Mammary epithelial cell (primary cell): ENCODE measurements at regions of chr2 and their contacts with region 1.

Region 1: DNA sequence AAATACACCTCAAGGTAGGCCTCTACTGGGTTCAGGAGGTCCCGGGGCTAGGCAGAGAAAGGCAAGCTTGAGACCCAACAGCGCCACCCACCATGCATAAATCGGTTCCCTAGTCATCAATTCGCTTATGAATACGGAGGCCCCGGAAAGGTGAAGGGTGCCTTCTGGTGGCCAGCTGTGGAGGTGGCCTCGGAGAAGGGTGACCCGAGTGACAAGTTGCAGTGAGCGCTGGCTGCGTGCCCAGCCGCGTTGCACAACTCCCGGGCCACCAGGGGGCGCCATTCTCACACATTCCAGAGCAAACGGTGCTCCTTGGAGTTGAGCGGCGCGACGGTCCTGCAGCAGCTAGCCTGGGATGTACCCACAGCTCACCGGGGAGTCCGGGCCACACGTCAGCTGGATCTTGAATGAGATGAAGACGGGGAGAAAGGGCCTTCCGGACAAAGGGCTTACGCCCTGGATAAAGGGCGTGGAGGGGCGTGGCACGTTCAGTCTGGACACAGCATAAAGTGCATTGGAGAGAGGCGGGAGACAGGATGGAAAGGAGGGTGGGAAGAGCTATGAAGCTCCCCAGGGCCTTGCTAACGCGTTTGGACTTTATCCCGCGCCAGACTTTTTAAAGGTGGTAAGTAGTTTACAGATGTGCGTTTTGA is 20.4 kb downstream of the TMSB10 start:
- DNase-seq: peak; percentile 91
- H3K4me3 ChIP-seq: peak overlapping the region; percentile 13 to 42 (median 34)
- H3K27ac ChIP-seq: peak overlapping the region; percentile 81
- H3K4me1 ChIP-seq: peaks cover 35% of the 10 kb centered on the region
- H3K27me3 ChIP-seq: no peaks in the 10 kb centered on the region
- CTCF ChIP-seq: peak; percentile 89 to 97

Region 2: GRCh38 chr2:84631047-84631446 is 294.8 kb before region 1 on chr2:
- CTCF ChIA-PET with region 1: no interaction called
- dilution Hi-C with region 1: no loop called
- in situ Hi-C with region 1: no loop called
- intact Hi-C with region 1: loop called (anchors 5 kb)
- DNase-seq: peak; percentile 24
- H3K4me3 ChIP-seq: no peak overlapping the region
- H3K27ac ChIP-seq: no peak overlapping the region
- H3K4me1 ChIP-seq: no peaks in the 10 kb centered on the region
- H3K27me3 ChIP-seq: no peaks in the 10 kb centered on the region
- CTCF ChIP-seq: peak; percentile 65 to 69

Region 3: DNA sequence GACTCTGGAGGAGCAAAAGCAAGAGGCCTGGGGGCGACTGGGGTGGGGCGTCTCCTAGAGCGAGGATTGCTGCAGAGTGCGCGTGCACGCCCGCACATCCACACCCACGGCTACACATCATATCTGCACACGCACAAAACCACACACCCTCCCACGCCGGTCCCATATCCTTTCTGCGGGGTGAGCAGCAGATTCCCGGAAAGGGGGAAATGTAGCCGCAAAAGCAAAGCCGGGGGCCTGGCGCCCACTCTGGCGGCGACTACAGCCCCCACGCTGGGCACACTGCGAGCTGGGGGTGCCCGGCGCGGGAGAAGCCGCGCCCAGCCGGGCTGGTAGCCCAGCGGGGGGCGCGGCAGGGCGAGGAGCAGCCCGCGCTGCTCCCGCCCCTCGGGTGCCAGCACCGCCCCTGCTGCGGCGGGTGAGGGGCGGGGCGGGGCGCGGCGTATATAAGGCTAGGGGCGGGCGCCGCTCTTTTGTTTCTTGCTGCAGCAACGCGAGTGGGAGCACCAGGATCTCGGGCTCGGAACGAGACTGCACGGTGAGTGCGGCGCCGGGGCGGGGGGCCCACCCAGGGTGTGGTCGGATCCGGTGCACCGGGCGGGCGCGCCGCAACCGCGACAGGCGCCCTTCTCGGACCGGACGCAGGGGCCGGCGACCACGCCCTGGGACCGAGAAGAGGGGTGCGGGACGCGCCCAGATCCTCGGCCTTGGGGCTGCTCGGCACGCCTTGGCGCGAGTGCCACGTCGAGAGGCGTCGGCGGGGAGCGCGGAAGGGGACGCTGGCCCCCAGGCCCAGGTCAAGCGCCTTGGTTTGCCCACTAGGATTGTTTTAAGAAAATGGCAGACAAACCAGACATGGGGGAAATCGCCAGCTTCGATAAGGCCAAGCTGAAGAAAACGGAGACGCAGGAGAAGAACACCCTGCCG is 20.4 kb before region 1 on chr2 and contains the start of gene TMSB10:
- CTCF ChIA-PET with region 1: interaction called, 4 read pairs
- dilution Hi-C with region 1: no loop called
- in situ Hi-C with region 1: no loop called
- intact Hi-C with region 1: loop called (anchors 1 kb)
- DNase-seq: peak; percentile 85
- H3K4me3 ChIP-seq: peak within 1 kb of the TSS; percentile 82 to 94 (median 94)
- H3K27ac ChIP-seq: peak within 1 kb of the TSS; percentile 81
- H3K4me1 ChIP-seq: peaks cover 3% of the 10 kb centered on the region
- H3K27me3 ChIP-seq: no peaks in the 10 kb centered on the region
- CTCF ChIP-seq: peak in 1 of 2 donors; percentile 16
- total RNA-seq, gene TMSB10: 3,165 to 4,185 TPM

Region 4: DNA sequence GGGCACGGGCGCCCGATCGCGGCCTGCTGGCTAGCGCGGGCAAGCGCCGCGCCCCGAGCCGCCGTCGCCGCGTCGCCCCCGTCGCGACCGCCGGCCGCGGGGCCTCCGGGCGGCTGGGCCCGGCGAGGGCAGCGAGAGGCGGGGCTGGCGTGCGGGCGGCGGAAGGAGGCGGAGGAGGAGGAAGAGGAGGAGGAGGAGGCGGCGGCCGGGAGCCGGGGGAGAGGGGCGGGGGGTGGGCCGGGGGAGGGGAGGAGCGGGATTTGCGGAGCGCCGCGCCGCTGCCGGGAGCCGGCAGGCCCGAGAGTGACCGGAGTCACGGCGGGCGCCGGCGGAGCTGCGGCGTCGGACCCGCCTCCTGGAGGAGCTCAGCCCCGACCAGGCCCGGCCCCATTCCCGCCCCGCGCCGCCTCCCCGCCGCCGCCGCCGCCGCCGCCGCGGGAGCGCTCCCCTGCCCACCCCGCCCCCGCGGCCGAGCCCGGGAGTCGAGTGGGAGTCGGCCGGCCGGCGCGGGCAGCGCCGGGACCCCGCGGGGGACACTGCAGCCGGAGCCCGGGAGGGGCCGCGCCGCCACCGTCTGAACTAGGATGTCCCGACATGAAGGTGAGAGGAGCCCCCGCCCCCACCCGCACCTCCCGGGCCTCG is 45.1 kb after region 1 on chr2 and contains the start of gene KCMF1:
- CTCF ChIA-PET with region 1: no interaction called
- dilution Hi-C with region 1: no loop called
- in situ Hi-C with region 1: no loop called
- intact Hi-C with region 1: loop called (anchors 1 kb)
- DNase-seq: peak; percentile 77
- H3K4me3 ChIP-seq: peak within 1 kb of the TSS; percentile 76 to 94 (median 81)
- H3K27ac ChIP-seq: peak within 1 kb of the TSS; percentile 93
- H3K4me1 ChIP-seq: peaks cover 4% of the 10 kb centered on the region
- H3K27me3 ChIP-seq: no peaks in the 10 kb centered on the region
- CTCF ChIP-seq: no peak
- total RNA-seq, gene KCMF1: 73.2 to 94.7 TPM

Region 5: DNA sequence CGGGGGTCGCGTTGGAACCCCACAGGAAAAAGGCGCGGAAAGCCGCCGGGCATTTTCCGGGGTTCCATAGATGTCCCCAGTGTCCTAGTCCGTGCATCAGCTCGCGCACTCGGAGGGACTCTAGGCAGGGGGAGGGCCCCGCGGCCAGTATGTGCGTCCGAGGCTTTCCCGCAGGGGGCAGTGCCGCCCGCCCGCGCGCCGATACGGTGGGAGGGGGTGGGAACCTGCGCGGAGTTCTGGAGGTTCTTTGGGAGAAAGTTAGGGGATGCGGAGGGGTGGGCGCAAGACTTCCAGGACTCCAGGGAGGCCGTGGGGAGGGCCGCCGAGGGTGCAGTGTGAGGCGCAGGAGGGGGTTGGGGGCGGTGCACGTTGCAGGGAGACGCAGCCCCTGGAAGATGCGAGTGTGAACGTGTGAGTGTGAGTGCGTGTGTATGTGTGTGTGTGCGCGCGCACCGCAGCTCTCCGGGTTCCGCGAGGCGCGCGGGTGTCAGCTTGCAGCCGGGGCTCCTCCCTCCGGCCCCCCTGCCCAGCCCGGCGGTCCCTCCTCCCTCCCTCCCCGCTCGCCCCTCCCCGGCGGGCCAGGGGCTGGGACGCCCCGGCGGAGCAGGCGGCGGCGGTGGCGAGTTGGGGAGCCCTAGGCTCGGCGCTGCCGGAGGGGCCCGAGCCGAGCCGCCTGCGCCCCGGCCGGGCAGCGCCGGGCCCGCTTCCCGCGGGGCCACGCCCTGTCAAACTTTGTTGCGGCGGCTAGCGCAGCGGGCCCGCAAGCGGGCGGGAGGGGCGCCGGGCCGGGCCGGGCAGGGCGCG is 207.2 kb after region 1 on chr2 and contains the start of gene TCF7L1:
- CTCF ChIA-PET with region 1: no interaction called
- dilution Hi-C with region 1: no loop called
- in situ Hi-C with region 1: no loop called
- intact Hi-C with region 1: loop called (anchors 5 kb)
- DNase-seq: peak; percentile 86
- H3K4me3 ChIP-seq: peak within 1 kb of the TSS; percentile 89 to 98 (median 97)
- H3K27ac ChIP-seq: peak within 1 kb of the TSS; percentile 67
- H3K4me1 ChIP-seq: peaks cover 18% of the 10 kb centered on the region
- H3K27me3 ChIP-seq: no peaks in the 10 kb centered on the region
- CTCF ChIP-seq: peak; percentile 57 to 82
- total RNA-seq, gene TCF7L1: 6.3 to 26.4 TPM

Region 6: GRCh38 chr2:85156153-85156552 is 230.3 kb after region 1 on chr2:
- CTCF ChIA-PET with region 1: no interaction called
- dilution Hi-C with region 1: no loop called
- in situ Hi-C with region 1: no loop called
- intact Hi-C with region 1: no loop called
- DNase-seq: no peak
- H3K4me3 ChIP-seq: no peak overlapping the region
- H3K27ac ChIP-seq: no peak overlapping the region
- H3K4me1 ChIP-seq: peaks cover 30% of the 10 kb centered on the region
- H3K27me3 ChIP-seq: no peaks in the 10 kb centered on the region
- CTCF ChIP-seq: no peak

Region 7: DNA sequence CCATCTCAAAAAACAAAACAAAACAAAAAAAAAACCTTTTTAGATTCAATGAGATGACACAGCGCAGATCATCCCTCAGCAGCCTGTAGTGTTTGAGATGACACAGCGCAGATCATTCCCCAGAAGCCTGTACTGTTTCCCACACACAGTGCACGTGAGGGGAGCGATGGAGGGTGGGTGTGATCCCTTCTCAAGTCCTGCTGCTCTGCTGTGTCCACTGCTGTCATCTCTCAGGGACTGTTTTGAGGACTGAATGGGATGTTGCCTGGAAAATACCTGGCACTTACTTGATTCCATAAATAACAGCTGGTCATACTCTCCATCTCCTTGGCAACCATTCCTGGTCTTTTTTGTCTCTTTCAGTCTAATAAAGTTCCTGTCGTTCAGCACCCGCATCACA is 376.3 kb after region 1 on chr2:
- CTCF ChIA-PET with region 1: no interaction called
- dilution Hi-C with region 1: no loop called
- in situ Hi-C with region 1: loop called in 1 of 2 experiments (anchors 25 kb)
- intact Hi-C with region 1: loop called (anchors 1 kb)
- DNase-seq: no peak
- H3K4me3 ChIP-seq: no peak overlapping the region
- H3K27ac ChIP-seq: no peak overlapping the region
- H3K4me1 ChIP-seq: peaks cover 5% of the 10 kb centered on the region
- H3K27me3 ChIP-seq: no peaks in the 10 kb centered on the region
- CTCF ChIP-seq: no peak

Region 8: GRCh38 chr2:85421260-85422071 is 495.6 kb after region 1 on chr2:
- CTCF ChIA-PET with region 1: no interaction called
- dilution Hi-C with region 1: no loop called
- in situ Hi-C with region 1: no loop called
- intact Hi-C with region 1: no loop called
- DNase-seq: no peak
- H3K4me3 ChIP-seq: no peak overlapping the region
- H3K27ac ChIP-seq: no peak overlapping the region
- H3K4me1 ChIP-seq: peaks cover 30% of the 10 kb centered on the region
- H3K27me3 ChIP-seq: no peaks in the 10 kb centered on the region
- CTCF ChIP-seq: no peak